Thyroid gland (tissue), 4 donors: ENCODE measurements at regions of chr6 and their contacts with region 1.

Region 1: GRCh38 chr6:73129653-73130443 is 95.4 kb downstream of the KHDC1L start:
- DNase-seq: peak; percentile 88 to 92
- H3K4me3 ChIP-seq: no peak overlapping the region
- H3K27ac ChIP-seq: no peak overlapping the region
- H3K4me1 ChIP-seq: no peaks in the 10 kb centered on the region
- H3K27me3 ChIP-seq: no peaks in the 10 kb centered on the region
- CTCF ChIP-seq: peak; percentile 75 to 100 (median 92)
- POLR2A ChIP-seq: no peak

Region 2: DNA sequence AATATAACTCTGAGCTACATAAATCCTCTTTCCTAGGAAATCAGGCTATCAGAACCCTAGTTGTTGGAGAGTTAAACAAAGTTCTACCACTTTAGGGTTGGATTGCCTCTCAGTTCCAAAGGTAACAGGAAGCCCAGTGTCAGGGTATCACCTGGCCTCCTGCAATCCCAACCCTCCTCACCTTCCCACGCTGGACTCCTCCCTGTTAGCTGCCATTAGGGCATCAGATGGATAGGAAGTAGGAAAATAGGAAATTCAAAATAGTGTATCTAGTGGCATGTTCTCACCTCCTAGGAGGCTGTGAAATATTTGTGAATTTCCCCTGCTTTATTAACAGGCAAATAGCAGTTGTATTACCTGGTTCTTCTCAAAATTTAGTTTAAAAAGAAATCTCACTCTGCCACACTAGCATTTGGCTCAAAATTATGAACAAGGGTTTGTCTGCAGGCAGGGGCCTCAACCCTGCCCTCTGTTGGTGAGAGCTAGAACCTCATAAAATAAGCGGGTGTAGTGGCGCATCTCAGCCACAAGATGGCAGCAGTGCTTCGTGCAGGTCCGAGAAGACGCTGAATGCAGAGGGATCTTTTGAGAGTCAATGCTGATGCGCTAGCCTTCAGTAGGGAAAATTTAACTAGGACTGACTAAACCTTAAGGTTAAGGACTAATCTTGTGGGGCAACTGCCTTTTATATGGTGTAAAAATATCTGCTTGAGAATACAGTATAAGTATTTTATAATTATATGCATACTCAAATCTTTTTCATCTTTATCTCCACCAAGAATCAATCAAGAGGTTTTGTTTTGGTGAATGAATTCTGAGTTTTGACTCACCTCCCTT is 717.8 kb before region 1 on chr6:
- intact Hi-C with region 1: loop called (anchors 5 kb)
- DNase-seq: peak; percentile 57 to 67
- H3K4me3 ChIP-seq: no peak overlapping the region
- H3K27ac ChIP-seq: no peak overlapping the region
- H3K4me1 ChIP-seq: no peaks in the 10 kb centered on the region
- H3K27me3 ChIP-seq: no peaks in the 10 kb centered on the region
- CTCF ChIP-seq: peak; percentile 100
- POLR2A ChIP-seq: no peak

Region 3: DNA sequence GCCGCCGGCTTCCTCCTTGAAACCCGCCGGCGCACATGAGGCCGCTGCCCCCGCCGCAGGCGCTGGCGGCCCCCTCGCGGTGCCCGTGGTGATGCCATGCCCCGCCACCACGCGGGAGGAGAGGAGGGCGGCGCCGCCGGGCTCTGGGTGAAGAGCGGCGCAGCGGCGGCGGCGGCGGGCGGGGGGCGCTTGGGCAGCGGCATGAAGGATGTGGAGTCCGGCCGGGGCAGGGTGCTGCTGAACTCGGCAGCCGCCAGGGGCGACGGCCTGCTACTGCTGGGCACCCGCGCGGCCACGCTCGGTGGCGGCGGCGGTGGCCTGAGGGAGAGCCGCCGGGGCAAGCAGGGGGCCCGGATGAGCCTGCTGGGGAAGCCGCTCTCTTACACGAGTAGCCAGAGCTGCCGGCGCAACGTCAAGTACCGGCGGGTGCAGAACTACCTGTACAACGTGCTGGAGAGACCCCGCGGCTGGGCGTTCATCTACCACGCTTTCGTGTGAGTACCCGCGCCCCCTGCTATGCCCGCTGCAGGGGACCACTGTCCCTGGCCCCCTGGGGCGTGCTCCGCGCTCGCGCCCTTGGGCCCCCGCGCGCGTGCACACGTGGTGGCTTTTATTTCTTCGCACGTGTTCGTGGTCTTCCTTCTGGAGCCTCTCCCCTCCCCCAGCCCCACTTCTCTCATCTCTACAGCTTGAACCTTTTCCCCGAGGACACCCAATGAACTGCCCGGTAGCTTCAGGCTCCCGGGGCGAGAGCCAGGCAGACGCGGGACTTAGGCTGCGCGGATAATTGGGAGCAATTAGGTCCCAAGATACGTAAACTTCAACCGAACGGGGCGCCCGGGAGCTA is 507.5 kb before region 1 on chr6:
- intact Hi-C with region 1: loop called (anchors 5 kb)
- DNase-seq: peak; percentile 67 to 71
- H3K4me3 ChIP-seq: peak overlapping the region; percentile 39 to 81 (median 40)
- H3K27ac ChIP-seq: no peak overlapping the region
- H3K4me1 ChIP-seq: peaks cover 8 to 10% of the 10 kb centered on the region in 2 donors
- H3K27me3 ChIP-seq: no peaks in the 10 kb centered on the region
- CTCF ChIP-seq: peak in 3 of 6 experiments; percentile 12 to 49 (median 49)
- POLR2A ChIP-seq: peak in 1 of 2 donors; percentile 45

Region 4: DNA sequence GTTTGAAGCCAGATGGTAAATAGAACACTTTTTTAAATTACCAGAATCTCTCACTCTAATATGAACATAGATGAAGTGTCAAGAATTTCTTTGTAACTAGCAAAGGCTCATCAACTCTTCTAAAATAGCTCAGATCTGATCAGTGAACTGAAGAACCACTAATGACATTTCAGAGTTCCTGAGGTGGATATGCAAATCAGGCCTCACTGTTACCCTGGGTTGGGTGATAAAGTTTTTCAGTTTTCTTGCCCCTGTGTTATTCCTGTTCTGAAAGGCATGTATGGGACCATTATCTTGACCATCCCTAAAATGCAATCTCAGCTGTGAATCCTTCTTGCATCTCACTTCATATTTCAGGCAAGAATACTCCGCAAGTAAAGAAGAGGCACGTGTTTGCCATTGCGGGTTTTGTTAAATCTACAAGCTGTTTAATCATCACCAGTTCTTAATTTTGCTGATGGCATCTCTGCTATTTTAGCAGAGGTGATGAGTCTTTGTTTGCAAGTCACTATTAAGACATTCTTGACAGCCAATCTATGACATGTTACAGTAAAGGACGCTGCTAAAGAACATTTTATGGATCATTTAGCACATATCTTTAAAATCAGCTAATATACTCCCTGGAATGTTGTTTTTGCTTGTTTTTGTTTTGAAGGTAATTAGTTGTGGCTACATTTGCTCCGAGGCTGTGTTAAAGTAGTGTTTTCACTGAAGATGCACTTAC is 47.5 kb after region 1 on chr6:
- intact Hi-C with region 1: no loop called
- DNase-seq: no peak
- H3K4me3 ChIP-seq: no peak overlapping the region
- H3K27ac ChIP-seq: no peak overlapping the region
- H3K4me1 ChIP-seq: peaks cover 5 to 7% of the 10 kb centered on the region in 2 donors
- H3K27me3 ChIP-seq: no peaks in the 10 kb centered on the region
- CTCF ChIP-seq: no peak
- POLR2A ChIP-seq: no peak